ENCODE measurements at regions of chr20 and their contacts with region 1.

Region 1: DNA sequence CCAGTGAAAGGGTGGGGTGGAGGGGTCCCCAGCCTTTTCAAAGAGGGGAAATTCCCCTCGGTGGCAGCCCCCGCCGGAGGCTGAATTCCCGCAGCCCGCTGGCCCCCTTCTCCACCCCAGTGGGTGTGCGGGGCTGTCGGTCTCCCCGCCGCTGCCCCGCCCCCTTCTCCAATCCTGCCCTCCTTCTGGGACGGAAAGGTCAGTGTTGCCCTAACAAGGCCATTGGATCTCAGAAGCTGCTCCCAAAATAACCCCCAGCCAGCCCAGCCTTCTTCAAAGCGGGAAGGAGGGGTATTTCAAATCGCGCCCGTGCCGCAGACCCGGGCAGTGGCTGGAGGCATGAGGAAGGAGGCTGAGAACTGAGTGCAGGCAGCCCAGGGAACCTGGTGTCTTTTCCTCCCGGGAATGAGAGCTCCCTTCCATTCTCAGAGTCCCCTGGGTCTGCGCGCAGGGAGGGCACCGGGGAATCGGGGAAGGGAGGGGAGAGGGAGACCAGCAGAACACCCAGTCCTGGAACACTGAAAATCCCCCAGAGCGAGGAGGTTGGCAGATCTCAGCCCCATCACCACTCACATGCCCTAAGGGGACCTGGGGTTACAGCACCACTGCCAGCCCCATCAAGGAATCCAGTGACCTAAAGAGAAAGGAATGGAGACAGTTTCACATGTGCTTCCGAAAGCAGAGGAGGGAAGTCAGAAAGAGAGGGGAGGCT is at the start of gene JPH2:
- DNase-seq: peak; percentile 91
- ATAC-seq: peak; percentile 72
- H3K4me3 ChIP-seq: peak within 1 kb of the TSS; percentile 41; the same call in 1 of the 2 replicates
- H3K27ac ChIP-seq: peak within 1 kb of the TSS; percentile 78
- H3K4me1 ChIP-seq: peaks cover 41% of the 10 kb centered on the region
- H3K27me3 ChIP-seq: no peaks in the 10 kb centered on the region
- CTCF ChIP-seq: no peak
- total RNA-seq, gene JPH2: 15.5 and 15.8 TPM in 2 replicates

Region 2: GRCh38 chr20:44115762-44116644 is 71.2 kb before region 1 on chr20:
- CTCF ChIA-PET with region 1: interaction called, 85 read pairs
- POLR2A ChIA-PET with region 1: interaction called, 3 read pairs
- intact Hi-C with region 1: loop called (anchors 1 kb)
- DNase-seq: no peak
- ATAC-seq: peak; percentile 16; the same call in 1 of the 2 replicates
- H3K4me3 ChIP-seq: no peak overlapping the region
- H3K27ac ChIP-seq: no peak overlapping the region
- H3K4me1 ChIP-seq: peaks cover 11% of the 10 kb centered on the region; the same call in 1 of the 2 replicates
- H3K27me3 ChIP-seq: no peaks in the 10 kb centered on the region
- CTCF ChIP-seq: no peak

Region 3: DNA sequence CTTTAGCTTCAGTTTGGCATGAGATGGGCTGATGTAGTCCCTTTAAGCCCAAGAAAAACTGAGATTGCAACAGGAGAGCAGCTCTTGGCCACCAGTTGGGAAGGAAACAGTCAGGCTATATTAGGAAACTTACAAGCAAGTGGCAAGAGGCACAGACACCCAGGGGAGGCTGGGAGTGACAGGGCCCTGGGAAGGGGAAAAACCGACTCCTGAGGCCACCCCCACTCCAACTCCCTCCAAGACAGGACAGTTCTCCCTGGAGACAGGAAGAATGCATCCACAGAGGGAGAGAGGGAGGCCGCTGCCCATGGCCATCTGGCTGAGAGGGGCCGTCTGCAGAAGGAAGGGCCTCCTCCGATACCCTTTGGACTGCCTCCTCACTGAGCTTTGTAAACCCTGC is 20.7 kb before region 1 on chr20:
- CTCF ChIA-PET with region 1: interaction called, 12 read pairs
- POLR2A ChIA-PET with region 1: interaction called, 8 read pairs
- intact Hi-C with region 1: loop called (anchors 1 kb)
- DNase-seq: peak; percentile 82
- ATAC-seq: peak; percentile 75
- H3K4me3 ChIP-seq: peak overlapping the region; percentile 42
- H3K27ac ChIP-seq: peak overlapping the region; percentile 94
- H3K4me1 ChIP-seq: peaks cover 65% of the 10 kb centered on the region
- H3K27me3 ChIP-seq: no peaks in the 10 kb centered on the region
- CTCF ChIP-seq: no peak

Region 4: DNA sequence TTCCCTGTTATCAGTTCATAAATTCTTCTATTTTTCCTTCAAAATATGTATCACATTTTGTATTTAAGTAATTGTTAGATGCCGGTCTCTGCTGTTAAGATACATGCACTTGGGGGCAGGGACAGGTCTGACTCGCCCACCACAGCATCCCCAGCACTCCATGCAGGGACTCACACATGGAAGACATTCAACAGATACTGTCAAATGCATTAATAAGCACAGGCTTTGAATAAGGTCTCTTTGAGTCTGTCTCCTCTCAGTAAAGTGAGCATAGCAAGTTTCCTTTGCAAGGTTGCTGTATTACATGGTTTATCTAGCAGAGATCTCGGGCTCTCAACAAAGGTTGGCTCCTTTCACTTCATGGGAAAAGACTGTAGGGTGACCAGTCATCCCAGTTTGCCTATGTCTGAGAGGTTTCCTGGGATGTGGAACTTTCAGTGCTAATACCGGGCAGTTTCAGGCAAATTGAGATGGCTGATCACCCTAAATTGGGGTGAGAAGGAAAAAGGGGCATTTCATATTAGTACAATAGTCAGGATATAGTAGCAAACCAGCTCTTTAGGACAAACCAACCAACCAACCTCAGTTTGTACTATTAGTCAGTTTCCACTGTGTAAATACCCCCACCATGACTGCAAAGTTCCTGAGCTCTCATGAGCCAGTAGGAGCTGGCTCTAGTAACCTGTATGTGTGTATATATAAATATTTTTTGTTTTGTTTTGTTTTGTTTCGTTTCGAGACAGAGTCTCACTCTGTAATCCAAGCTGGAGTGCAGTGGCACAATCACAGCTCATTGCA is 15.2 kb before region 1 on chr20:
- CTCF ChIA-PET with region 1: interaction called, 10 read pairs
- POLR2A ChIA-PET with region 1: interaction called, 3 read pairs
- intact Hi-C with region 1: no loop called
- DNase-seq: peak; percentile 92
- ATAC-seq: peak; percentile 83
- H3K4me3 ChIP-seq: peak overlapping the region; percentile 41; the same call in 1 of the 2 replicates
- H3K27ac ChIP-seq: peak overlapping the region; percentile 97
- H3K4me1 ChIP-seq: peaks cover 63% of the 10 kb centered on the region
- H3K27me3 ChIP-seq: no peaks in the 10 kb centered on the region
- CTCF ChIP-seq: no peak

Measured in PC-3 (cell line).